H1 (cell line): ENCODE measurements at regions of chr17 and their contacts with region 1.

Region 1: DNA sequence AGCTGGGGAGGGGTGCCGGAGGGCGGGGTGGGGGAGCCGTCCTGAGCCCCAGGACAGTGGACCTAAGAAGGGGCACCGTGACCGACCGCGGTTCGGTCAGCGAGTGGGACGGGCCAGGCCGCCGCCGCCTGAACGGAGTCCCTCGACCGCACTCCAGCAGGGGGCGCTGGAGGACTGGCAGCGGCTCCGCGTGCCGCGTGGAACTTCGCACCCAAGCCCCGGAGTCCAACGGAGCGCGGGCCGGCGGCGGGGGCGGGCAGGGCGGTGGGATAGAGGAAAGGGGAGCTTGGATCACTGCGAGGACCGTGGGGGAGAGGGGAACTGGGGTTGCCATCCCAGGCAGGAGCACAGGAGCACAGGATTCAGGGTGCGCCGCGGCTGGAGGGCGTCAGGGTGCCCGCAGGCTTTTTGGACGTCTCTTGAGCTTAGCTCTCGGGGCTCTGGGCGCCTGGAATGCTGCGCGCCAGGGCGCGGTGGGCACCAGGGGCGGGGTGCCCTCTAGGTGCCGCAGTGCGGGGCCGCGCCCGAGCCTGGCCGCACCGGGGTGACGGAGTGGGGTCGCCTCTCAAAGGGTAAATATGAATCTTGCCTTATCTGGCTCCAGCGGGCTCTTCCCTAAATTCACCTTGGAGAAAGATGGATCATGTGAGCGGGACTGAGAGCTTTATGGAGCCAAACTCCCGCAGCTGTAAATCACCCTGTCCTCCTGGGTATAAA is 382 bp upstream of the OTOP2 start:
- DNase-seq: peak in 1 of 2 experiments; percentile 89
- H3K4me3 ChIP-seq: peak overlapping the region; percentile 33 to 74 (median 36)
- H3K27ac ChIP-seq: no peak overlapping the region
- H3K4me1 ChIP-seq: peaks cover 0 to 19% (median 16%) of the 10 kb centered on the region in 4 experiments; a peak in 6 of 7 replicates
- H3K27me3 ChIP-seq: peaks cover 40 to 62% (median 53%) of the 10 kb centered on the region in 4 experiments
- CTCF ChIP-seq: peak; percentile 71 to 93 (median 80)
- EP300 ChIP-seq: no peak
- POLR2A ChIP-seq: no peak
- RAD21 ChIP-seq: peak; percentile 73 to 79

Region 2: DNA sequence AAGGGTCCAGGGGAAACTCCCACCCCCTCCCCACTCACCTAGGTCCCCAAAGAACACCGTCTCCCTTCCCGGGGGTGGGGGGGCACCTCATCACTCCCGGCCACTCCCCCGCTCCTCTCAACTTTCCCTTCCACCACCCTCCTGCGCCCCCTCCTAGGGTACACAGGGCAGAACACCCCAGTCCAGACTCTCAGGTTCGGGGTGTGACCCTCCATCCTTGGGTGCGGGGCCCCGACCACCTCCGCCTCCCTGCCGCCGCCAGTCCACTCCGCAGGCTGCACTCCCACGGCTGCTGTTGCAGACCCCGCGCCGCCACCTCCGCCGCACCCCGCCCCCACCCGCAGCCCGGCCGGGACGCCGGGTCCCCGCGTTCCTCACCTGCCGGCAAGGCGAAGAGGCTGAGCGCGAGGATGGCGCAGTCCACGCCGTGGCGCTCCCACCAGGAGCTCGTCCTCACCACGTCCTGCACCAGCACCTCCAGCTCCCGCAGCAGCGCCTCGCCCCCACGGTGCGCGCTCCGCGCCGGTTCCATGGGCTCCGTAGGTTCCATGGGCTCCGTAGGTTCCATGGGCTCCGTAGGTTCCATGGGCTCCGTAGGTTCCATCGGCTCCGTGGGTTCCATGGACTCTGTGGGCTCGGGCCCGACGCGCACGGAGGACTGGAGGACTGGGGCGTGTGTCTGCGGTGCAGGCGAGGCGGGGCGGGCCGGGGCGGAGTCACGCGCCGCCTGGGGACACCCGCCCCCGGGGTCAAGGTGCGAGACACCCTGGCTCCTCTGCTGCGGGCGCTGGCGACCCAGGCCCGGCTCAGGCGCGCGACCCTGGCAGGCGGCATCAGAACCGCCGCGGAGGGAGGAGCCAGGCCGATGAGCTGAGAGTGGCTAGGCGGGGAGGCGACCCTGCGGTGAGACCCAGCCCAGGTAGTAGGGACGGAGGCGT is 30.4 kb before region 1 on chr17 and contains the start of gene FADS6:
- CTCF ChIA-PET with region 1: interaction called, 12 read pairs
- POLR2A ChIA-PET with region 1: no interaction called
- DNase-seq: no peak
- H3K4me3 ChIP-seq: peak within 1 kb of the TSS; percentile 61 to 75 (median 64)
- H3K27ac ChIP-seq: no peak within 1 kb of the TSS
- H3K4me1 ChIP-seq: peaks cover 0 to 10% (median 4%) of the 10 kb centered on the region in 4 experiments; a peak in 4 of 7 replicates
- H3K27me3 ChIP-seq: peaks cover 16 to 43% (median 37%) of the 10 kb centered on the region in 4 experiments; a peak in 6 of 7 replicates
- CTCF ChIP-seq: no peak
- EP300 ChIP-seq: no peak
- POLR2A ChIP-seq: no peak
- RAD21 ChIP-seq: no peak
- total RNA-seq, gene FADS6: 0.56 and 0.80 TPM in 2 replicates

Region 3: GRCh38 chr17:74907012-74907411 is 16.7 kb before region 1 on chr17:
- CTCF ChIA-PET with region 1: interaction called, 10 read pairs
- POLR2A ChIA-PET with region 1: interaction called, 4 read pairs
- DNase-seq: no peak
- H3K4me3 ChIP-seq: no peak overlapping the region
- H3K27ac ChIP-seq: no peak overlapping the region
- H3K4me1 ChIP-seq: peaks cover 5 to 18% (median 14%) of the 10 kb centered on the region in 4 experiments
- H3K27me3 ChIP-seq: peaks cover 0 to 2% (median under 1%) of the 10 kb centered on the region in 4 experiments; a peak in 3 of 7 replicates
- CTCF ChIP-seq: no peak
- EP300 ChIP-seq: no peak
- POLR2A ChIP-seq: no peak
- RAD21 ChIP-seq: no peak

Region 4: GRCh38 chr17:74935585-74936469 is 12.1 kb after region 1 on chr17 and contains the start of gene OTOP3:
- CTCF ChIA-PET with region 1: interaction called, 1,072 read pairs
- POLR2A ChIA-PET with region 1: no interaction called
- DNase-seq: no peak
- H3K4me3 ChIP-seq: peak within 1 kb of the TSS; percentile 28 to 54 (median 36)
- H3K27ac ChIP-seq: no peak within 1 kb of the TSS
- H3K4me1 ChIP-seq: peaks cover 0 to 6% (median 5%) of the 10 kb centered on the region in 4 experiments; a peak in 4 of 7 replicates
- H3K27me3 ChIP-seq: peaks cover 22 to 59% (median 52%) of the 10 kb centered on the region in 4 experiments
- CTCF ChIP-seq: no peak
- EP300 ChIP-seq: no peak
- POLR2A ChIP-seq: no peak
- RAD21 ChIP-seq: no peak
- total RNA-seq, gene OTOP3: not detected in 2 replicates

Region 5: GRCh38 chr17:74972107-74972972 is 48.6 kb after region 1 on chr17 and contains the start of gene HID1:
- CTCF ChIA-PET with region 1: interaction called, 10 read pairs
- POLR2A ChIA-PET with region 1: no interaction called
- DNase-seq: peak in 1 of 2 experiments; percentile 91
- H3K4me3 ChIP-seq: peak within 1 kb of the TSS; percentile 62 to 92 (median 62)
- H3K27ac ChIP-seq: no peak within 1 kb of the TSS
- H3K4me1 ChIP-seq: peaks cover 0 to 15% (median 9%) of the 10 kb centered on the region in 4 experiments; a peak in 6 of 7 replicates
- H3K27me3 ChIP-seq: peaks cover 17 to 43% (median 37%) of the 10 kb centered on the region in 4 experiments
- CTCF ChIP-seq: no peak
- EP300 ChIP-seq: no peak
- POLR2A ChIP-seq: no peak
- RAD21 ChIP-seq: no peak
- total RNA-seq, gene HID1: 13.8 and 15.1 TPM in 2 replicates